K562 (cell line): ENCODE measurements at regions of chr16 and their contacts with region 1.

Region 1: DNA sequence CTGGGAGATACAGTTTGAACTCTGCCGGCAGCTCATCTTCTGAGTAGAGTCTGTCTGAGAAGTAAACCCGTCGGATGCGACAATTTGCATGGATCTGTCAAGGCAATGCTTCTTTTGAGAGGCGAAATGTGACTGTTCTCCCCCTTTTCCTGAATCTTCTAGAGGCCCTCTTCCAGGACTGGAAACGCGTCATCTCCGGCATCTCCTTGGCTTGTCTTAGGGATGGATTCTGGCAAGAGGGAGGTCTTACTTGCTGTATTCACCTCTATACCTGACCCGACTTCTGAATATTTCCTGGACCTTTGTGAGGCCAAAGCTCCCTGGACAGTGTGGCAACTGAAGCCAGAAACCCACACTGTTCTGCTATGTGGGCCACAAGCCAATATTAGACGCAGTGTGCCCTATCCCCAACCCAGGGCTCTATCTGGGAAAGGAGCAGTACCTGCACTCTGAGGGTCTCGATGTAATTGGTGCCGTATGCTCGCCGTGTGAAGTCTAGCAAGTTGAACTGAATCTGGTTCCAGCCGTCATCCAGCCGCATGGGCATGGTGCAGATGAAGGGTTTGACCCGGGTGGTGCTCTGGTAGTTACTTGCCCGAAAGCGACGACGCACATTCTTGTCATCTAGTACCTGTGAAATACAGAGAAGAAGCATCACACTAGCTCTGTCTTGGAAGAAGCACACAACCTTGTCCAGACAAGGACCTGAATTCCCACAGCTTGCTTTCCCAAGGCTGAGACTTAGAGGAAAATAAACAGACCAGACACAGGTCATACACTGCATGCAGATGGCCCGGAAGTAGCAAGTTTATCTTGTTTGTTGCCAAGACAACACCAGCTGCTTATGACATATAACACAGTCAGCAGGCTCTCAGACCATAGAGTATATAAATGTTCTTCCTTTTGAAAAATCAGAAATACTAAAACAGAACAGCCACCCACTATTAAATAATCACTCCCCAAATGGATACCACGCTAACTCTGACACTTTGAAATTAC is 14.1 kb downstream of the CFAP20 start:
- DNase-seq: no peak
- ATAC-seq: no peak
- H3K4me3 ChIP-seq: no peak overlapping the region
- H3K27ac ChIP-seq: no peak overlapping the region
- H3K4me1 ChIP-seq: peaks cover 0 to 3% of the 10 kb centered on the region in 2 experiments; a peak in 3 of 5 replicates
- H3K27me3 ChIP-seq: no peaks in the 10 kb centered on the region
- CTCF ChIP-seq: no peak
- EP300 ChIP-seq: no peak
- POLR2A ChIP-seq: no peak
- RAD21 ChIP-seq: no peak

Region 2: DNA sequence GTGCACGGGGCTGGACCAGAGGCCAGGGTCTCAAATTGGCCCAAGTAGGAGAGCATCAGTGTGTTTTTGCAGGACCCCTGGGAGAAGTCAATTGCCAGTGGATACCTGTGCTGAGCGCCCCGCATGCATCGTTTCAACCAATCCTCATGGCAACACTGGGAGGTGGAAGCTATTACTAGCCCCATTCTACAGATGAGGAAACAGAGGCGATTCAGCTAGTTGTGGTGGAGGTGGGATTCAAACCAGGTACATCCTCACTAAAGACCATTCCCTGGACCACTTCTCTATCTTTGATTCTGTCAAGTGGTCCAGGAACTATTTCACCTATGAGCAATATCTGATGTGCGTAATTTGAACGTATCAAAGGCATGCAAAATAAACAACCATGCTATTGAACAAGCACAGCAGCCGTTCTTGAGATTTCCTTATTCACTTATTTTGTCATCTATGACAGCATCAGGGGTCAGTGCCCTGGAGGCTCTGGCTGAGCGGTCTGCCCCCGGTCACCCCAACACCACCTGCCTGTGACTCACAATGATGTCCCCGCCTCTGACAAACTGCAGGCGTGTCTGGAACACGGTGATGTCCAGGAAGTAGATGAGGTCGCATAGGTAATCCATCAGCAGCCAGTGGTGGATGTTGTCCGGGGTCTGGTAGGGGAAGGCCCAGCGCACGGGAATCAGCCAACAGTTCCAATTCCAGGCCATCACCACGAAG is 198.2 kb before region 1 on chr16:
- CTCF ChIA-PET with region 1: no interaction called
- POLR2A ChIA-PET with region 1: no interaction called
- in situ Hi-C with region 1: no loop called
- intact Hi-C with region 1: no loop called
- DNase-seq: no peak
- ATAC-seq: peak; percentile 34; the same call in 1 of the 3 replicates
- H3K4me3 ChIP-seq: no peak overlapping the region
- H3K27ac ChIP-seq: no peak overlapping the region
- H3K4me1 ChIP-seq: 0 out of 5 replicates have a peak, but pooled peaks cover 0 to 3% of the 10 kb centered on the region in 2 experiments
- H3K27me3 ChIP-seq: peaks cover 12 to 68% of the 10 kb centered on the region in 2 experiments; a peak in 4 of 5 replicates
- CTCF ChIP-seq: no peak
- EP300 ChIP-seq: no peak
- POLR2A ChIP-seq: no peak
- RAD21 ChIP-seq: no peak

Region 3: GRCh38 chr16:58032710-58033293 is 82.3 kb before region 1 on chr16:
- CTCF ChIA-PET with region 1: no interaction called
- POLR2A ChIA-PET with region 1: interaction called, 5 read pairs
- in situ Hi-C with region 1: loop called (anchors 5 kb)
- intact Hi-C with region 1: no loop called
- DNase-seq: peak; percentile 55 to 78 (median 70)
- ATAC-seq: peak; percentile 58
- H3K4me3 ChIP-seq: no peak overlapping the region
- H3K27ac ChIP-seq: no peak overlapping the region
- H3K4me1 ChIP-seq: peaks cover 33 to 61% of the 10 kb centered on the region in 2 experiments
- H3K27me3 ChIP-seq: no peaks in the 10 kb centered on the region
- CTCF ChIP-seq: no peak
- EP300 ChIP-seq: no peak
- POLR2A ChIP-seq: no peak
- RAD21 ChIP-seq: no peak